ENCODE measurements at regions of chr12 and their contacts with region 1.

Region 1: GRCh38 chr12:12813120-12814101 is at the start of gene DDX47:
- DNase-seq: peak; percentile 91 to 93
- ATAC-seq: peak; percentile 92 to 96
- H3K4me3 ChIP-seq: peak within 1 kb of the TSS; percentile 82 to 99 (median 93)
- H3K27ac ChIP-seq: peak within 1 kb of the TSS; percentile 78 to 88 (median 82)
- H3K4me1 ChIP-seq: peaks cover 24 to 38% of the 10 kb centered on the region in 2 donors
- H3K27me3 ChIP-seq: no peaks in the 10 kb centered on the region
- CTCF ChIP-seq: peak; percentile 95 to 99 (median 97)
- POLR2A ChIP-seq: peak in 1 of 2 donors; percentile 15
- total RNA-seq, gene DDX47: 37.1 to 75.4 (median 58.3) TPM

Region 2: DNA sequence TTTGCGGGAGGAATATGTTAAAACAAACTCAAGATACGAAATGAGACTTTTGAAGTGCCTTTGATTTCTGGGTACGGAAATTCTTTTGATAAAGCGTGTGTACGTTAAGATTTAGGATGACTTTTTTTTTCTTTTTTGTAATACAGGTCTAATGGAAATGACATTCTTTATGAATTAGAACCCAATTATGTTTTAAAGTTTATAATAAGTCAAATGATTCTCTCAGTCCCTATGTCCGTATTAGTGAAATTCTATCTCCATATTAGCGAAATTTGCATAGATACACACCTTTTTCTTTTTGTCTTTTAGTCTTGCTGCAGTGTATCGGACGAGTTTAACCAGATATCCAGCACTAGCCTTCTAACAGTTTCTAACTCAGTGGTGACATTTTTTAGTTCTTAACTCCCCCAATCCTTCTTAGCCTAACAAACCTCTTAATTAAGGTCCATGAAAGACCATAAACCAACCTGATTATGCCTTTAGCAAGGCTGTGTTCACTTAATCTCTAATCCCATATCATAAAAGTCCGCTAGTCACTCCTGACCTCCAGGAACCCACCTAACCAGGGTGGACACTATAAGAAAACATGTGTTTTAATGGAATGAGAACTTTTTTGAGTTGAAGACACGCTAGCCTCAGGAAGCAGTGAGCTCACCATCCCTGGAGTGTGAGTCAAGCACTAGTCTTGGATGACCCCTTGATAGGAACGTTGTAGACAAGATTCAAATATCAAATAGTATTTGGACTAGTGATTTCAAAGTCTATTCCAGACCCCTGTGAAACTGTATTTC is 86.9 kb before region 1 on chr12:
- in situ Hi-C with region 1: no loop called
- intact Hi-C with region 1: no loop called
- DNase-seq: no peak
- ATAC-seq: no peak
- H3K4me3 ChIP-seq: peak overlapping the region; percentile 66 to 88 (median 80)
- H3K27ac ChIP-seq: peak overlapping the region; percentile 96 to 99 (median 98)
- H3K4me1 ChIP-seq: peaks cover 20 to 22% of the 10 kb centered on the region in 2 donors
- H3K27me3 ChIP-seq: no peaks in the 10 kb centered on the region
- CTCF ChIP-seq: no peak
- POLR2A ChIP-seq: no peak

Region 3: DNA sequence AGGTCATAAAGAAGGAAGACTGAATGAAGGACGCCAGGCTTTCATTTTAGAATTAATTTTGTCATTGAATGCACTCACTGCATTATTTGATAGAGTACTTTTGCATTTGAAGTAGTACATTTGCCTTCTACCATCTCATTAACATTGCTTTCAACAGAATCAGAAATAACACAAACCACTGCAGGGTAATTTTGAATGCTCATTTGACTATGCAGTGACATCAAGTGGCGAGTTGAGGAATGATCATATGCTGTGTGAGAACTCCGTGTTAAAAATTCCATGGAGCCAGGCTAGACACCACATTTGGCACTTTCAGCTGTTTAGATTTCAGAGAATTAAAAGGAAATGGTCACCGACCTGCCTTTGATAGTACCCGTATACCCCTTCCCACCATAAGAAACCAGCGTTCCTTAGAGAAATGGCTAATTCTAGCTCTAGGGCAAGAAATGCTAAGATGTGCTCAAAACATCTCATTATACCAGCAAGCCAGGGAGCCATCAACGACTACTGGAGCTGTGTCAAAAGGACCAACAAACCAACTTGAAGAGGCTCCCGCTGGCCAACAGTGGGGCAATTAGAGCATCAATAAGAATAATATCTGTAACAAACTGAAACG is 170.1 kb after region 1 on chr12:
- in situ Hi-C with region 1: loop called in 2 of 4 experiments (anchors 10 to 25 kb)
- intact Hi-C with region 1: no loop called
- DNase-seq: no peak
- ATAC-seq: peak; percentile 55 to 68
- H3K4me3 ChIP-seq: no peak overlapping the region
- H3K27ac ChIP-seq: no peak overlapping the region
- H3K4me1 ChIP-seq: no peaks in the 10 kb centered on the region
- H3K27me3 ChIP-seq: no peaks in the 10 kb centered on the region
- CTCF ChIP-seq: peak in 4 of 5 experiments; percentile 6 to 56 (median 42)
- POLR2A ChIP-seq: no peak

Measured in gastrocnemius medialis (tissue), 4 donors.